ENCODE measurements at regions of chr9 and their contacts with region 1.

Region 1: DNA sequence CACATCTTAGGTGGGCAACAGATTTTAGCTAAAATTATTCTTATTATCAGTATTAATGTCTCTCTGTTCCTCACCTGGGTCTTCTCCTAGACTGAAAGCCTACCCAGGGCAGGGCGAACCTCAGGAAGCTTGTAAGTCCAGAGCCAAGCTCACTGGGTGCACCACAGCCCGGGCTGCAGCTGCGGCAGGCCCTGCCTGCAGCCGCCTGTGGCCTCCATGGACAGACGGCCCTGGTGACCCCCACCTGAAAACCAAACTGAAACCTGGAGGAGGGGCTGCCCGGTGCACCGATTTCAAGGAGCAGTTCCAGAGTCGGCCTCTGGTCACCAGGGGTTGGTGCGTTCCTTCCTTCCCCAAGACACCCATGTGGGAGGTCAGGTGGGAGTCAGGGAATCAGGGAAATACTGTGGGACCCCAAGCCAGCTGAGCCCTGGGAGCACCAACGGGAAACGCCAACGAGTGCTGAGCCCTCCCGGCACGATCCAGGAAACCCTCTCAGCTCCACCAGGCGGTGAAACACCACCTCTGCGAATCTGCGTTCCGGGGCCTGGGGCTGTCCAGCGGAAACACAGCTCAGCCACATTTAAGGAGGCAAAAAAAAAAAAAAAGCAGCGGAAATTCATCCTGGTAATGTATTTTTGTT is 68.6 kb upstream of the PPP1R26 start:
- DNase-seq: peak in 1 of 5 donors; percentile 33
- ATAC-seq: no peak
- H3K4me3 ChIP-seq: no peak overlapping the region
- H3K27ac ChIP-seq: no peak overlapping the region
- H3K4me1 ChIP-seq: peaks cover 0 to 6% (median 0%) of the 10 kb centered on the region in 12 donors
- H3K27me3 ChIP-seq: peaks cover 0 to 58% (median 11%) of the 10 kb centered on the region in 9 donors
- CTCF ChIP-seq: no peak
- POLR2A ChIP-seq: no peak

Region 2: GRCh38 chr9:134778841-134779411 is 632.0 kb before region 1 on chr9:
- intact Hi-C with region 1: loop called in 2 of 10 experiments (anchors 10 kb)
- DNase-seq: peak; percentile 57 to 77 (median 68)
- ATAC-seq: peak; percentile 39 to 84 (median 74)
- H3K4me3 ChIP-seq: no peak overlapping the region
- H3K27ac ChIP-seq: no peak overlapping the region
- H3K4me1 ChIP-seq: peaks cover 0 to 29% (median 6%) of the 10 kb centered on the region in 12 donors
- H3K27me3 ChIP-seq: no peaks in the 10 kb centered on the region
- CTCF ChIP-seq: peak; percentile 57 to 84 (median 69)
- POLR2A ChIP-seq: no peak

Region 3: DNA sequence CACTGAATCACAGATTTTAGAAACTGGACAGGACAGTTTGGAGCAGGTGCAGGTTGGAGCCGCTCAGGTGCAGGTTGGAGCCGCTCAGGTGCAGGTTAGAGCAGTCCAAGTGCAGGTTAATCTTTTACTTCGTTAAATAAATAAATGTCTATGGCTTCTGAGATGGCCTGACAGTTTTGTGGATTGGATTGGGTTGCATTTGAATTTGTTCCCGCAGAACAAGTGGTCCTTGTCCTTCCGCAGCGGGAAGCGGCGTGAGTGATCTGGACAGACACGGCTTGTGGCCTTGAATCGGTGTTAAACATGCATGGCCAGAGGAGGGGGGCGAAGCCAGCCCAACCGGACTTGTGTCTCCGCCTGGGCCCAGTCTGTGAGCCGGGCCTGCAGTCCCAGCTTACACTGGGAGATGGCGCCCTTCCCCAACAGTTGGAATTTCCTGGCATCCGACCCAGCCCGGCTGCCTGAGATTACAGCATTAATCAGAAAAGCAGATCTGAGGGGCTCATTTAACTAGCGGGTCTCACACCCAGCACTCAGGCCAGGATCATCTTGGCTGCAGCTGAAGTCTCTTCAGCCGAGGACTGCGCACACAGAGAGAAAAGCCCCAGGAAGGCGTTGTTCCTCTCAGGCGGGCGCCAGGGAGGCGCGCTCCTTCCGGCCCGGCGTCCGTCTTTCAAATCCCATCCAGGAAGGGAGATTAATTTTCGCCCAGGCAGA is 325.0 kb before region 1 on chr9:
- intact Hi-C with region 1: loop called in 9 of 10 experiments (anchors 1 to 2 kb)
- DNase-seq: peak; percentile 71 to 81 (median 74)
- ATAC-seq: peak; percentile 59 to 82 (median 74)
- H3K4me3 ChIP-seq: peak overlapping the region in 10 of 12 donors; percentile 32 to 63 (median 46)
- H3K27ac ChIP-seq: peak overlapping the region in 4 of 12 donors; percentile 5 to 16 (median 6)
- H3K4me1 ChIP-seq: peaks cover 0 to 38% (median 19%) of the 10 kb centered on the region in 12 donors
- H3K27me3 ChIP-seq: peaks cover 15 to 51% (median 23%) of the 10 kb centered on the region in 9 donors
- CTCF ChIP-seq: peak; percentile 82 to 98 (median 96)
- POLR2A ChIP-seq: no peak

Region 4: DNA sequence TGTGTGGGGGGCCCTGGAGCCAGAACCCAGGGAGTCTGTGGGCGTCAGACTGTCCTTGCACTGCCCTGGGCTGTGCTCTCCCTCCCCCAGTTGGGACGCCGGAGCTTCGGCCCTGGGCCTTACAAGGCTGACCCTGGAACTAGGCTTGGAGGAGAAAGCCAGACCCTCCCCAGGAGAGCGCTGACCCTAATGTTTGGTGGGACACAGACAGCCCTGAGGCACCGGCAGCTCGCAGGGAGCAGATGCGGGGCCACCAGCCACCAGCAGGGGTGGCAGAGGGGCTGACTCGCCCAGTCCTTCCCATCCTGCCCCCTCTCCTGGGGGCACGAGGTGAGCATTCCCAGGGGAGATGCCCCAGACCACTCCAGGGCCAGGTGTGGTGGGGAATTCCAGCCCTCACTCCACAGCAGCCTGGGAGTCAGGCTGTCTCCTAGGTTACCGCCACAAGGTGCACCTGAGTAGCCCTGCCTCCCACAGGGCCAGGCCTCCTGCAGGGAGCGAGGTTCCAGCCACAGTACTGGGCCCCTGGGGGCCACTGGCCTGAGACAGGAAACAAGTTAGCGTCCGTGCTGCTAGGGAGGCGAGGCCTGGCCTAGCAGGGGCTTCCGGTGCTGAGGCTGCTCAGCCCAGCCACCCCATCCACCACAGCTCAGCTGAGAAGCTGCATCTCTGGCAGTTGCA is 188.9 kb before region 1 on chr9:
- intact Hi-C with region 1: loop called in 1 of 10 experiments (anchors 5 kb)
- DNase-seq: peak in 3 of 5 donors; percentile 13 to 56 (median 20)
- ATAC-seq: no peak
- H3K4me3 ChIP-seq: no peak overlapping the region
- H3K27ac ChIP-seq: no peak overlapping the region
- H3K4me1 ChIP-seq: peaks cover 0 to 10% (median 0%) of the 10 kb centered on the region in 12 donors
- H3K27me3 ChIP-seq: peaks cover 0 to 61% (median 22%) of the 10 kb centered on the region in 9 donors
- CTCF ChIP-seq: no peak
- POLR2A ChIP-seq: no peak

Region 5: GRCh38 chr9:135275571-135276289 is 135.2 kb before region 1 on chr9:
- intact Hi-C with region 1: loop called in 1 of 10 experiments (anchors 5 kb)
- DNase-seq: peak in 2 of 5 donors; percentile 44 to 48
- ATAC-seq: peak in 3 of 4 donors; percentile 27 to 70 (median 42)
- H3K4me3 ChIP-seq: no peak overlapping the region
- H3K27ac ChIP-seq: no peak overlapping the region
- H3K4me1 ChIP-seq: peaks cover 0 to 3% (median 0%) of the 10 kb centered on the region in 12 donors
- H3K27me3 ChIP-seq: peaks cover 0 to 49% (median 4%) of the 10 kb centered on the region in 9 donors
- CTCF ChIP-seq: no peak
- POLR2A ChIP-seq: no peak

Region 6: DNA sequence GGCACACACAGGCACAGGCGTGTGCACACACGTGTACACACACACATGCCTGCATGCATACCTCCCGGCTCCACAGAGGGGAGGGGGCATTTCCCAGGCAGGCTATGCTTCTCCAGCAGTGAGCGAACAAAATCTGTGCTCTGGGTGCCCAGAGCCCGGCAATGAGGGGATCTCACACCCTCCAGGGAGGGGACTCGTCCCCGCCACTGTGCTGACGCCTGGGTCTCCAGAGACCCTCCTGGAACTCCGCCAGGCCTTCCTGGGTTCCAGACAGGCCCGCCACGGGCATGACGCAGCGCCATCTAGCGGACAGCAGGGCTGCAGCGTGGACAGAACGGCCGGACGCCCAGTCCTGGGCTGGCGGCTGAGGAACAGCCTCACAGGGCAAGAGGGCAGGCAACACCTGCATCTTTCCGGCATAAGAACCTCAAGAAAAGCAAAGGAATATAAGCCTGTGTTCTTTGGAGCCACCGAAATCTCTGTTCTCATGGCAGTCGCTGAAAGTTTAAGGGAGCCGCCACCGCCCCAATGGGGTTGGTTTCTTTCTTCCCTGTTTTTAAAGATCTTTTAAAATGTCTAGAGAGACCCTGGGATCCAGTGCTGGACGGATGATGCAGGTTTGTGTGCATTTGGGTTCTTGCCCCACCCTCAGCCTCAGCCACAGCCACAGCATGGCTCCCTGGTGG is 67.0 kb before region 1 on chr9:
- intact Hi-C with region 1: loop called in 5 of 10 experiments (anchors 5 kb)
- DNase-seq: peak; percentile 57 to 82 (median 63)
- ATAC-seq: peak; percentile 55 to 77 (median 66)
- H3K4me3 ChIP-seq: no peak overlapping the region
- H3K27ac ChIP-seq: no peak overlapping the region
- H3K4me1 ChIP-seq: peaks cover 0 to 14% (median 0%) of the 10 kb centered on the region in 12 donors
- H3K27me3 ChIP-seq: peaks cover 0 to 70% (median 17%) of the 10 kb centered on the region in 9 donors
- CTCF ChIP-seq: peak; percentile 84 to 95 (median 89)
- POLR2A ChIP-seq: no peak

Region 7: GRCh38 chr9:135524130-135524861 is 113.3 kb after region 1 on chr9:
- intact Hi-C with region 1: no loop called
- DNase-seq: peak in 1 of 5 donors; percentile 60
- ATAC-seq: peak in 3 of 4 donors; percentile 5 to 45 (median 23)
- H3K4me3 ChIP-seq: no peak overlapping the region
- H3K27ac ChIP-seq: no peak overlapping the region
- H3K4me1 ChIP-seq: no peaks in the 10 kb centered on the region
- H3K27me3 ChIP-seq: peaks cover 0 to 25% (median 3%) of the 10 kb centered on the region in 9 donors
- CTCF ChIP-seq: no peak
- POLR2A ChIP-seq: no peak